ENCODE measurements at regions of chr11 and their contacts with region 1.

Region 1: GRCh38 chr11:86068951-86069407 is at the start of gene PICALM:
- DNase-seq: peak; percentile 98
- H3K4me3 ChIP-seq: peak within 1 kb of the TSS; percentile 98
- H3K27ac ChIP-seq: peak within 1 kb of the TSS; percentile 100
- H3K27me3 ChIP-seq: no peaks in the 10 kb centered on the region
- CTCF ChIP-seq: no peak
- polyA plus RNA-seq, gene PICALM: 294 and 303 TPM in 2 replicates

Region 2: GRCh38 chr11:86162239-86162638 is 93.3 kb after region 1 on chr11:
- CTCF ChIA-PET with region 1: interaction called, 3 read pairs
- POLR2A ChIA-PET with region 1: interaction called, 14 read pairs
- DNase-seq: peak; percentile 58
- H3K4me3 ChIP-seq: no peak overlapping the region
- H3K27ac ChIP-seq: peak overlapping the region; percentile 71
- H3K27me3 ChIP-seq: no peaks in the 10 kb centered on the region
- CTCF ChIP-seq: no peak

Region 3: GRCh38 chr11:86193297-86194095 is 124.5 kb after region 1 on chr11:
- CTCF ChIA-PET with region 1: interaction called, 14 read pairs
- POLR2A ChIA-PET with region 1: interaction called, 5 read pairs
- DNase-seq: peak; percentile 47
- H3K4me3 ChIP-seq: no peak overlapping the region
- H3K27ac ChIP-seq: no peak overlapping the region
- H3K27me3 ChIP-seq: no peaks in the 10 kb centered on the region
- CTCF ChIP-seq: peak; percentile 85

Region 4: GRCh38 chr11:86244522-86245368 is 175.8 kb after region 1 on chr11 and contains the start of gene EED:
- CTCF ChIA-PET with region 1: no interaction called
- POLR2A ChIA-PET with region 1: interaction called, 12 read pairs
- DNase-seq: peak; percentile 85
- H3K4me3 ChIP-seq: peak within 1 kb of the TSS; percentile 86
- H3K27ac ChIP-seq: peak within 1 kb of the TSS; percentile 97
- H3K27me3 ChIP-seq: no peaks in the 10 kb centered on the region
- CTCF ChIP-seq: no peak
- polyA plus RNA-seq, gene EED: 11.9 and 17.5 TPM in 2 replicates